ENCODE measurements at regions of chr18 and their contacts with region 1.

Region 1: DNA sequence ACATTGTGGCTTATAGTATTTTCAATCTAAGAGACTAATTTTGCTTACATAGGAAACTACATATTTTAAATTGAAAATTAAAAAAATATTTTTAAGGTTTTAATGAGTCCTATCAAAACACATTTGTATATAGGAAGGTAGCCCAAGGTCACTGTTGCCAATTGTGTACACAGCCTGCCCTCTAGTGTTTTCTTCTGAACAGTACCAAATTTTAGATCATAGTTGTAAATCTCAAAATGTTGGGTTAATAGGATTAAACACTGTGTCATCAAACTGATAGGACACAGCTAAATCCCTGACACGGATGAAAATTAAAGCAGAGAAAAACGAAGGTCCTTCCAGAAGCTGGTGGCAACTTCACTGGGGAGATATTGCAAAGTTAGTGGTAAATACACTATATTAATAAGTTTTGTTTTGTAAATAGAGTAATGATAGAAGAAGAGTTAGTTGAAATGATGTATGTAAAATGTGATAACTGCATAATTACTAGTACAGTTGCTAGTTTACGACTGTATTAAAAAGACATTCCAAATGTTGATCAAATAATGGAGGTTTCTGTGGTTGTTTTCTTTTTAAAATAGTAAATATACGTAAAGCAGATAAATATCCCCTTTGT is 19.7 kb downstream of the CLUL1 start:
- DNase-seq: peak in 4 of 14 experiments; percentile 4 to 54 (median 46)
- ATAC-seq: no peak
- H3K4me3 ChIP-seq: no peak overlapping the region
- H3K4me3 Mint-ChIP-seq: no peak overlapping the region
- H3K27ac ChIP-seq: no peak overlapping the region
- H3K27ac Mint-ChIP-seq: no peak overlapping the region
- H3K4me1 ChIP-seq: no peaks in the 10 kb centered on the region
- H3K4me1 Mint-ChIP-seq: no peaks in the 10 kb centered on the region
- H3K27me3 ChIP-seq: peaks cover 0 to 5% of the 10 kb centered on the region in 2 experiments
- H3K27me3 Mint-ChIP-seq: peaks cover 7% of the 10 kb centered on the region
- CTCF ChIP-seq: peak; percentile 70

Region 2: GRCh38 chr18:111292-112014 is 505.0 kb before region 1 on chr18:
- CTCF ChIA-PET with region 1: no interaction called
- POLR2A ChIA-PET with region 1: no interaction called
- intact Hi-C with region 1: loop called in 1 of 2 experiments (anchors 5 kb)
- DNase-seq: peak; percentile 39 to 89 (median 70)
- ATAC-seq: peak; percentile 48
- H3K4me3 ChIP-seq: peak overlapping the region; percentile 41
- H3K4me3 Mint-ChIP-seq: peak overlapping the region; percentile 92
- H3K27ac ChIP-seq: peak overlapping the region in 1 of 2 donors; percentile 84
- H3K27ac Mint-ChIP-seq: peak overlapping the region; percentile 89
- H3K4me1 ChIP-seq: peaks cover 10% of the 10 kb centered on the region
- H3K4me1 Mint-ChIP-seq: peaks cover 15% of the 10 kb centered on the region
- H3K27me3 ChIP-seq: no peaks in the 10 kb centered on the region
- H3K27me3 Mint-ChIP-seq: peaks cover 4% of the 10 kb centered on the region
- CTCF ChIP-seq: no peak

Region 3: DNA sequence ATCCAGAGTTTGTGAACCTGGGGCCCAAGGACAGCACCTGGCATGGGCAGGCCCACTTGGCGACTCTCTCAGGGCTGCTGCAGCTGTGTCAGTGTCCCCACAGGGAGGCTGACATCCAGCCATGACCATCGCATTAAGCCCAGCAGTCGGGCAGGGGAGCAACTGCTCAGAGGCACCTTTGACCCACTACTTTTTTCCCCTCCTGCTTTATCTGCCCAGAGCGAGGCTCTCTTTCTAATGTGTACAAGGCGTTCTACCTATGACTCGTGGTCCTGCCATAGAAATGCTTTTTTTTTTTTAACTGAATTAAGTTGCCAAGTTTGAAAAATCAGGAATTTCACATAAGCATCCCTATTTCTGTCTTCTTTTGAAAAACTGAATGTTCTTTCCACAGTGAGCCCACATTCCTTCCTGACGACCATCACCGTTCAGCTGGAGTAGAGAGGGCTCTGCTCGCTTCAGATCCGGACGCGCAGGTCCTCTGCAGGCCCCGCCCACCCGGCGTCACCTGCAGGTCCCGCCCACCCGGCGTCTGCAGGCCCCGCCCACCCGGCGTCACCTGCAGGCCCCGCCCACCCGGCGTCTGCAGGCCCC is 20.1 kb before region 1 on chr18:
- CTCF ChIA-PET with region 1: no interaction called
- POLR2A ChIA-PET with region 1: no interaction called
- intact Hi-C with region 1: loop called in 1 of 2 experiments (anchors 1 kb)
- DNase-seq: peak in 3 of 14 experiments; percentile 68 to 84 (median 83)
- ATAC-seq: peak; percentile 69
- H3K4me3 ChIP-seq: no peak overlapping the region
- H3K4me3 Mint-ChIP-seq: peak overlapping the region; percentile 42
- H3K27ac ChIP-seq: no peak overlapping the region
- H3K27ac Mint-ChIP-seq: no peak overlapping the region
- H3K4me1 ChIP-seq: peaks cover 13% of the 10 kb centered on the region
- H3K4me1 Mint-ChIP-seq: peaks cover 10% of the 10 kb centered on the region
- H3K27me3 ChIP-seq: peaks cover 3 to 28% of the 10 kb centered on the region in 2 experiments
- H3K27me3 Mint-ChIP-seq: peaks cover 55% of the 10 kb centered on the region
- CTCF ChIP-seq: no peak

Measured in CD4-positive, alpha-beta T cell (primary cell).